Heart left ventricle (tissue), 16 donors: ENCODE measurements at regions of chr1 and their contacts with region 1.

Region 1: DNA sequence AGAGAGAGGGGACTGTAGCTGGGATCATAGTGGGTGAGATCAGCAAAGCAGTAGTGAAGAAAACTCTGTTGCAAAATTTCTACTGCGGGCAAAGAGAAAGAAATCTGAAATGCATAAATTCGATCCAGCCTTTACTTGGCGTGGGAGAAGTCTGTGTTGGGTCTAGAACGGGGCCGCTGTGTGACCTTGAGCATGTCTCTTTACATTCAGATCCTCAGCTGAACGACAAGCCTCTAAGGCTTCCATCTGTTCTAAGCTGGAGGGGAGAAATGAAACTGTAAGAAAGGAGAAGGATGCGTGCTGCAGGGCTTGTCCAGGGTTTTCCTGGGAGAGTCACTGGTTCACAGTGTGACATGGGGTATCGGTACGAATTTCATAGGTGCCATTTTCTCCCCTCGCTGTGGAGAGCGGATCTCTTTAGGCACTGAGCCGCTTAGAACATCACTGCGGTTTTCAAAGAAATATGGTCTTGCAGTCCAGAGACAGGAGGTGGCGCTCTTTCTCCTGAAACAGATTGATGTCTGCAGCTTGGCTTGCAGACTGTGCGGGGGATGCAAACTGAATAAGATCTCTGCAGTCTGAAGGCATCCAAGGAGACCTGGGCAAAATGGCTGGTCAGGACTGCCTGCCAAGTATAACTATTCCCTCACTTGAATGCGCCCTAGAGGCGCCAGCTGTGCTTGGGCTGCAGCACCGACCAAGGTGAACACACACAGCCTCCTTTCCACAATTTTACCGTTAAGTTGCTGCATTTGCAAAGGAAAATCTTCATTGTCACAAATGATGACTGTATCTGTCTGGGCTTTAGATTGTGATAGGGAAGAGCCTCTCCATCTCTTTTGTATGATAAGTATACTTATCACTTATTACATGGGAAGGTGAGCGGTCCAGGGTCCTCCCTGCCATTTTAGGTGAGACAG is 104.1 kb downstream of the XCL2 start:
- DNase-seq: peak; percentile 68 to 82 (median 73)
- ATAC-seq: peak; percentile 91 to 96 (median 92)
- H3K4me3 ChIP-seq: peak overlapping the region in 9 of 12 donors; percentile 12 to 47 (median 30)
- H3K27ac ChIP-seq: no peak overlapping the region
- H3K4me1 ChIP-seq: peaks cover 0 to 12% (median 2%) of the 10 kb centered on the region in 12 donors
- H3K27me3 ChIP-seq: no peaks in the 10 kb centered on the region
- CTCF ChIP-seq: peak; percentile 48 to 81 (median 70)
- POLR2A ChIP-seq: no peak

Region 2: DNA sequence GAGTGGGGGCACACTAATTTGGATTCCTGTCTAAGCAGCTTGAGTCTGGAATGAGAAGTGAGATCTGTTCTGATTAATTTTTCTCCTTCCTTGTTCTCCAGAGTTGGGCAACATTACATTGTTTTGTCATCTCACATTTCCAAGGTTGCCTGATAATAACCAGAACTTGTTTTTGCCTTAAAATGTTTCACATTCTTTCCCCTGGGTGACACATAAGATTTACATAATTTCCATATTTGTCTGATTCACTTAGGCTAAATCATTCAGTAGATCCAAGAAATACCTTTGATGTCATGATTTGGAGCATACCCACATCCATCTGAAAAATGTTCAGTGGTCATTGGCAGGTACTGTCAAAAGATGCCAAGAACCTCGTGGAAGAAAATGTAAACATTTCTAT is 43.8 kb after region 1 on chr1:
- intact Hi-C with region 1: no loop called
- DNase-seq: no peak
- ATAC-seq: peak in 1 of 4 donors; percentile 11
- H3K4me3 ChIP-seq: no peak overlapping the region
- H3K27ac ChIP-seq: peak overlapping the region in 4 of 12 donors; percentile 22 to 74 (median 37)
- H3K4me1 ChIP-seq: peaks cover 0 to 40% (median 4%) of the 10 kb centered on the region in 12 donors
- H3K27me3 ChIP-seq: no peaks in the 10 kb centered on the region
- CTCF ChIP-seq: no peak
- POLR2A ChIP-seq: no peak

Region 3: GRCh38 chr1:168567007-168567406 is 127.3 kb after region 1 on chr1:
- intact Hi-C with region 1: loop called in 9 of 10 experiments (anchors 2 to 10 kb)
- DNase-seq: no peak
- ATAC-seq: no peak
- H3K4me3 ChIP-seq: no peak overlapping the region
- H3K27ac ChIP-seq: no peak overlapping the region
- H3K4me1 ChIP-seq: no peaks in the 10 kb centered on the region
- H3K27me3 ChIP-seq: no peaks in the 10 kb centered on the region
- CTCF ChIP-seq: no peak
- POLR2A ChIP-seq: no peak

Region 4: DNA sequence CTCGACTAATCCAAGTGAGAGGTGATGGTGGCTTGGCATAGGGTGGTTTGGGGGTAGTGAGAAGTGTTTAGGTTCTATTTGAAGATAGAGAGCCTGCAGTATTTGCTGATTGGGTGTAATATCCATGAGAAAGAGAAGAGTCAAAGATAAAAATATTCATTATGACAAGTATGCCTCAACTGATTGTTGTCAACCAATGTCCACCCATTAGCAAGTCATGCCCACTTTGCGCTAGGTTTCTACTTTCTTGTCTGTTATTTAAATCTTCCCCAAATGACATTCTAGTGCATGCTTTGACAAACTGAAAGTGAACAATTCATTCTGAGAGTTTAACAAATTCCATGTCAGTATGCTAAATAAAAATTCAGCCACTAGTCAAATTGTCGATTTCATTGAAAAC is 132.9 kb after region 1 on chr1:
- intact Hi-C with region 1: loop called (anchors 2 to 10 kb)
- DNase-seq: no peak
- ATAC-seq: no peak
- H3K4me3 ChIP-seq: no peak overlapping the region
- H3K27ac ChIP-seq: no peak overlapping the region
- H3K4me1 ChIP-seq: no peaks in the 10 kb centered on the region
- H3K27me3 ChIP-seq: no peaks in the 10 kb centered on the region
- CTCF ChIP-seq: no peak
- POLR2A ChIP-seq: no peak